ENCODE measurements at regions of chr9 and their contacts with region 1.

Region 1: GRCh38 chr9:126690431-126691350 is 77.0 kb downstream of the LMX1B start:
- DNase-seq: no peak
- H3K4me3 ChIP-seq: no peak overlapping the region
- H3K27ac ChIP-seq: no peak overlapping the region
- H3K4me1 ChIP-seq: no peaks in the 10 kb centered on the region
- H3K27me3 ChIP-seq: peaks cover 3 to 4% of the 10 kb centered on the region in 2 experiments
- CTCF ChIP-seq: peak; percentile 65 to 84
- POLR2A ChIP-seq: no peak

Region 2: GRCh38 chr9:126611592-126612325 is 78.9 kb before region 1 on chr9:
- CTCF ChIA-PET with region 1: interaction called, 64 read pairs
- POLR2A ChIA-PET with region 1: no interaction called
- dilution Hi-C with region 1: no loop called
- intact Hi-C with region 1: loop called (anchors 1 kb)
- DNase-seq: peak; percentile 46
- H3K4me3 ChIP-seq: no peak overlapping the region
- H3K27ac ChIP-seq: no peak overlapping the region
- H3K4me1 ChIP-seq: no peaks in the 10 kb centered on the region
- H3K27me3 ChIP-seq: peaks cover 66% of the 10 kb centered on the region in 2 experiments
- CTCF ChIP-seq: peak; percentile 80 to 91
- POLR2A ChIP-seq: no peak

Region 3: GRCh38 chr9:126638571-126639132 is 52.0 kb before region 1 on chr9:
- CTCF ChIA-PET with region 1: interaction called, 19 read pairs
- POLR2A ChIA-PET with region 1: no interaction called
- dilution Hi-C with region 1: no loop called
- intact Hi-C with region 1: no loop called
- DNase-seq: no peak
- H3K4me3 ChIP-seq: no peak overlapping the region
- H3K27ac ChIP-seq: no peak overlapping the region
- H3K4me1 ChIP-seq: no peaks in the 10 kb centered on the region
- H3K27me3 ChIP-seq: peaks cover 42 to 55% of the 10 kb centered on the region in 2 experiments
- CTCF ChIP-seq: no peak
- POLR2A ChIP-seq: no peak

Region 4: GRCh38 chr9:126673689-126674364 is 16.9 kb before region 1 on chr9:
- CTCF ChIA-PET with region 1: interaction called, 68 read pairs
- POLR2A ChIA-PET with region 1: no interaction called
- dilution Hi-C with region 1: no loop called
- intact Hi-C with region 1: no loop called
- DNase-seq: no peak
- H3K4me3 ChIP-seq: no peak overlapping the region
- H3K27ac ChIP-seq: no peak overlapping the region
- H3K4me1 ChIP-seq: no peaks in the 10 kb centered on the region
- H3K27me3 ChIP-seq: peaks cover 52 to 63% of the 10 kb centered on the region in 2 experiments
- CTCF ChIP-seq: no peak
- POLR2A ChIP-seq: no peak

Region 5: GRCh38 chr9:126914458-126915280 is 224.0 kb after region 1 on chr9 and contains the start of gene RALGPS1:
- CTCF ChIA-PET with region 1: no interaction called
- POLR2A ChIA-PET with region 1: no interaction called
- dilution Hi-C with region 1: no loop called
- intact Hi-C with region 1: no loop called
- DNase-seq: peak; percentile 95
- H3K4me3 ChIP-seq: peak within 1 kb of the TSS; percentile 30 to 44 (median 37)
- H3K27ac ChIP-seq: no peak within 1 kb of the TSS
- H3K4me1 ChIP-seq: no peaks in the 10 kb centered on the region
- H3K27me3 ChIP-seq: peaks cover 0 to 1% of the 10 kb centered on the region in 2 experiments
- CTCF ChIP-seq: no peak
- POLR2A ChIP-seq: no peak
- total RNA-seq, gene RALGPS1: 5.5 and 6.8 TPM in 2 replicates

Measured in endothelial cell of umbilical vein (primary cell).